ENCODE measurements at regions of chr4 and their contacts with region 1.

Region 1: DNA sequence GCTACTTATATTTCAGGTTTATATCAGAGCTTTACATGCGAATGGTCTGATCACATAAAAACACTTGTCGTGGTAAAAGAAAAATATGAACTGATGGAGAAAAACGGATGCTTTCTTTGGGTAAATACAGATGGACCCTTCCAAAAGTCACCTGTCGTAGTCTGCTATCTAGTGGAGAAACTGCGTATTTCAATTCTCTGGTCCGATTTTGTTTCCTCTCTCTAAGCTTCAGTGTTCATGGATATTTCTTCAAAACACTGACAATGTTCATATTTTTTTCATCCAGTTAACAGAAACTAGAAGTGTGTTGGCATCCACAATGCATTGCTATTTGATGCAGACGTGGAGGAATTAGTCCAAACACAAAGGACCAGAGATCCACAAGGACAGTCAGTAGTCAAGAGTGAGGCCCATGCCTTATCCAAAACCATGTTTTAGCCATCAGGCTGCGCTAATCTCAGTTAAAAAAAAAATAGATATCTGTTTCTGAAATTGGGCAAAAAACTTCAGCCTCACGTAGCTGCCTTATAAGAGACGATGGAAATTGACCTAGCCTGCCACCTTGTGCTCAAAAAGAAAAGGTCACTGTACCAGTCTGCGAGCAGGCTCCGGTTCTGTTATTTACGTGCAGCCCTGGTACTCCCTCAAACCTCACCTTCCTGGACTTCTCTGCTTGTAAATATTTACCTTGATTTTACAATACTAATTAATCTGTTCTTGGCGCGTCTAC is 16.0 kb downstream of the MEPE start:
- DNase-seq: peak in 7 of 10 donors; percentile 37 to 91 (median 60)

Region 2: DNA sequence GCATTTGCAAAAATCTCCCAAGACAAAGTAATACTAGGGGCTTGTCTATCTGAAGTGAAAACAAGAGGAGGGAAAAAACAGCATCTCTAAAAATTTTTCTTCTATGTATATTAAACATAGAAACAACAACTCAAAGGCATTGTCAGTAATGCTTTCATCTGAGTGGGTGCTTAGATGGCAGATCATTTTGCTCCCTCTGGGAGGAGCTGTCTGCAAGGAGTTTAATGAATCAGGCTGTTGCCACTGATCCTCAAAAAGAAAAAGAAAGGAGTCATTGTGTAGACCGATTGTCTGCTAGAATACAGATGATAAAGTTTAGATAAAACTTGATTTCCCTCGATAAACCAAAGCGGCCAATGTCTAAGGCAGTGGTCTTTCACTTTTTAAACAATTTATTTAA is 578.6 kb before region 1 on chr4:
- intact Hi-C with region 1: loop called (anchors 10 kb)
- DNase-seq: peak in 2 of 10 donors; percentile 11 to 44

Region 3: DNA sequence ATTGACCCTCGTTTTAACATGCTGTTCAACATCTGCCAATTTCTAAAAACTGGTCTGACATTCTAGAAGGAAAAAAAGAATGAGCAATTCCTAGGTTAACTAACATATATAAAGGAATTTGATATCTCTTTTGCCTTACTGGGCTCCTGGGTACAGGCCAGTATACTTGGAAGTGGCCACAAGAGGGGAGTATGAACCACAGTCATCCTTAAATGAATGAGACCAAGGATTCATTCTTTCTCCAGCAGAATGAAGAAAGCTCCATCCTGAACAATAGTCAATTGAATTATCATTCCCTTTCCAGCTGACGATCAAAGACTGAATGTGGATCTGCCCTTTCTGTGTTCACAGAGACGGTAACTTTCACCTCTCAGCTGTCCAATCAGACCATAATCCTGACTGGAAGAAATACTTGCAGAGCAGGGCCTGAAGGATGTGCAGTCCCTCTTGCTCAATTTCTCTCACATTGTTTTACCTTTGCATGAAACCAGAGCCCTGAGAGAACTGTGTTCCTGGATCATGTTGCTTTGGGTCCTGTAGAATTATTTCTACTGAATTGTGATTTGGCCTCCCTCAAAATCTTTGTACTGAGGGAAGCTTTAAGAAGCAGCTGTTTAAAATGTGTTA is 304.8 kb before region 1 on chr4:
- intact Hi-C with region 1: loop called (anchors 2 kb)
- DNase-seq: peak in 1 of 10 donors; percentile 29

Region 4: GRCh38 chr4:87973283-87974169 is 124.7 kb after region 1 on chr4:
- intact Hi-C with region 1: loop called (anchors 1 kb)
- DNase-seq: peak in 8 of 10 donors; percentile 41 to 90 (median 75)

Region 5: GRCh38 chr4:88211473-88212252 is 362.9 kb after region 1 on chr4:
- intact Hi-C with region 1: loop called (anchors 5 kb)
- DNase-seq: peak in 2 of 10 donors; percentile 22 to 58